ENCODE measurements at regions of chrX and their contacts with region 1.

Region 1: DNA sequence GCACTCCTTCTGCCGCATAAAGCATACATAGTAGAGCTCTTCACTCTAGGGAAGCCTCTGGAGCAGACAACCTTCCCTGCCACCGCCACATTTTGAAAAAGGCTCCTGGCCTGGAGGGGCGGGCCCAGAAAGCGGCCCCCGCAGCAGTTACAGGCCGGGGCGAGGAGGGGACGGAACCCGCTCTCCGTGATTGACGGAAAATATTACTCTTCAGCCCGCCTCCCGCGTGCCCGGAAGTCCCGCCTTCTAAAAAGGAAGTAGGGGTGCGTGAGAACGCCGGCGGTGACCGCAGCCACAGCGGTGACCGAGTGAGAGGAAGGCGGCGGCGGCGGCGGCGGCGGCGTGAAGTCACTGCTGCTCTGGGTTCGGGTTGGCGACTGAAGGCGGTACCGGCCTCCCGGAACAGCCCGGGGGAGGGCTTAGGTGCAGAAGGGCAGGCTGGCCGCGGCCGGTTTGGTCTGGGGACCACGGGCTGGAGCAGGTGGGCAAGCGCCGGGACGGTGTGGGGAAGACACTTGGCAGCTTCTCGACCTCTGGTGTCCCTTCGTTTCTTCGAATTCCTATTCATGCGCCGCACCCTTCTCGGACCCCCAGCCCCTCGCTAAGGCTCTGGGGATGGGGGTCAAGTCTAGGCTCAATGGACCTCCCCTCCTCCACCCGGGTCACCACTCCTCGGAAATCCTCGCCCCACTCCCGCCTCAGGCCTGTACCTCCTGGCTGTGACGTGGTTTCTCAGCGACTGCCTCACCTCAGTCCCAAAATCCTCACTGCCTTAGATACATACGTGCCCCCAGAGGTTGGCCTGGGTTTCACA is at the start of gene HCCS:
- DNase-seq: peak; percentile 96
- total RNA-seq, gene HCCS: 14.5 to 17.7 TPM

Region 2: GRCh38 chrX:10244915-10245622 is 866.2 kb before region 1 on chrX:
- intact Hi-C with region 1: loop called in 1 of 2 experiments (anchors 5 kb)
- DNase-seq: no peak

Region 3: GRCh38 chrX:11129534-11130105 is 18.4 kb after region 1 on chrX:
- intact Hi-C with region 1: no loop called
- DNase-seq: no peak